Naive thymus-derived CD8-positive, alpha-beta T cell (primary cell): ENCODE measurements at regions of chr16 and their contacts with region 1.

Region 1: GRCh38 chr16:4538350-4539235 is at the start of gene CDIP1:
- DNase-seq: peak; percentile 84 to 97 (median 92)
- ATAC-seq: peak; percentile 85 to 88
- H3K4me3 Mint-ChIP-seq: peak within 1 kb of the TSS; percentile 75 to 91 (median 82)
- H3K27ac Mint-ChIP-seq: peak within 1 kb of the TSS; percentile 87 to 98 (median 94)
- H3K4me1 Mint-ChIP-seq: peaks cover 25 to 46% (median 41%) of the 10 kb centered on the region in 4 donors
- H3K27me3 Mint-ChIP-seq: no peaks in the 10 kb centered on the region
- polyA plus RNA-seq, gene CDIP1: 18.2 to 25.3 (median 25.0) TPM

Region 2: GRCh38 chr16:4416200-4417032 is 122.2 kb before region 1 on chr16 and contains the start of gene CORO7:
- POLR2A ChIA-PET with region 1: interaction called, 18 read pairs
- DNase-seq: peak; percentile 98 to 100 (median 100)
- ATAC-seq: peak; percentile 68 to 69
- H3K4me3 Mint-ChIP-seq: peak within 1 kb of the TSS; percentile 92 to 99 (median 96)
- H3K27ac Mint-ChIP-seq: peak within 1 kb of the TSS; percentile 92 to 100 (median 99)
- H3K4me1 Mint-ChIP-seq: peaks cover 17 to 43% (median 34%) of the 10 kb centered on the region in 4 donors
- H3K27me3 Mint-ChIP-seq: no peaks in the 10 kb centered on the region
- polyA plus RNA-seq, gene CORO7: 44.6 to 79.9 (median 45.5) TPM

Region 3: GRCh38 chr16:4515611-4516233 is 22.9 kb before region 1 on chr16:
- POLR2A ChIA-PET with region 1: interaction called, 14 read pairs
- DNase-seq: no peak
- ATAC-seq: peak; percentile 37 to 44
- H3K4me3 Mint-ChIP-seq: peak overlapping the region; percentile 24 to 75 (median 56)
- H3K27ac Mint-ChIP-seq: peak overlapping the region; percentile 85 to 95 (median 89)
- H3K4me1 Mint-ChIP-seq: peaks cover 31 to 79% (median 58%) of the 10 kb centered on the region in 4 donors
- H3K27me3 Mint-ChIP-seq: no peaks in the 10 kb centered on the region

Region 4: GRCh38 chr16:4550591-4550990 is 12.0 kb after region 1 on chr16:
- POLR2A ChIA-PET with region 1: interaction called, 14 read pairs
- DNase-seq: no peak
- ATAC-seq: no peak
- H3K4me3 Mint-ChIP-seq: no peak overlapping the region
- H3K27ac Mint-ChIP-seq: peak overlapping the region in 2 of 10 donors; percentile 26 to 70
- H3K4me1 Mint-ChIP-seq: peaks cover 2 to 9% (median 6%) of the 10 kb centered on the region in 4 donors
- H3K27me3 Mint-ChIP-seq: no peaks in the 10 kb centered on the region